GM10248 (cell line): ENCODE measurements at regions of chr21 and their contacts with region 1.

Region 1: DNA sequence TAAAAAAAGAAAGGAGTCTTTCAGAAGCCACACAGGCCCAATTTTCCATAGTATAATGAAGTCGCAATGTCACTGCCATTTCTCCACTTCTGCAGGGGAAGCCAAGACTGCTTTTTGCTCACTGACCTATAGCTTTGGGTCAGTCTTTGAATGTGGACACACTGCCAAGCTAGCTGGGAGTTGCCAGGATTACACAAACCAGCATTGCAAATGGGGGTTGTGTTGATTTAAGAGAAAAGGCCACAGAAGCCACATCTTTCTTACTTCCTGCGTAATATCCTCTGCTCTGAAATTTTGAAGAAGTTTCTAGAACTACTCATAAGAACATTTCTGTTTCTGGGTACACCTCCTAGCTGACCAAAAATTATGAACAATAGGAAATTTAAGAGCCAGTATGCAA is 45.8 kb upstream of the SAMSN1 start:
- DNase-seq: no peak
- CTCF ChIP-seq: no peak

Region 2: DNA sequence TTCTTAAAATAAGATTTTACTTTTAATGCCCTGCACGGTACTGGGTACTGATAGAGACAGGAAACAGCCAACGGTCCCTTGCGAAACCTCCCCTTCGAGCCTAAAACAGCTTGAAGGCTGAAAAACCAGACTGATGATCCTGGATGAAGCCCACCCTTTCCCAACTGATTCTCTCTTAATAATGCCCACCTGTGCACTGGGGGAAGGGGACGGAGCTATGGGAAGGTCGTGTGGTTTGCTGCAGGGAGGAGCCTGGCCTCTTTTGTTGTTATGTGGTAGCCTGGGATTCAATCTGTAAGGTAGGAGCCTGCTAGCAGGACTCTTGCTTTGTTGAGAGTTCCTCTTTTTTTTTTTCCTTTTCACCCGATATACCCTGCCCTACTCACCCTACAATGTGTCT is 71.3 kb before region 1 on chr21:
- CTCF ChIA-PET with region 1: no interaction called
- POLR2A ChIA-PET with region 1: no interaction called
- DNase-seq: no peak
- CTCF ChIP-seq: no peak

Region 3: DNA sequence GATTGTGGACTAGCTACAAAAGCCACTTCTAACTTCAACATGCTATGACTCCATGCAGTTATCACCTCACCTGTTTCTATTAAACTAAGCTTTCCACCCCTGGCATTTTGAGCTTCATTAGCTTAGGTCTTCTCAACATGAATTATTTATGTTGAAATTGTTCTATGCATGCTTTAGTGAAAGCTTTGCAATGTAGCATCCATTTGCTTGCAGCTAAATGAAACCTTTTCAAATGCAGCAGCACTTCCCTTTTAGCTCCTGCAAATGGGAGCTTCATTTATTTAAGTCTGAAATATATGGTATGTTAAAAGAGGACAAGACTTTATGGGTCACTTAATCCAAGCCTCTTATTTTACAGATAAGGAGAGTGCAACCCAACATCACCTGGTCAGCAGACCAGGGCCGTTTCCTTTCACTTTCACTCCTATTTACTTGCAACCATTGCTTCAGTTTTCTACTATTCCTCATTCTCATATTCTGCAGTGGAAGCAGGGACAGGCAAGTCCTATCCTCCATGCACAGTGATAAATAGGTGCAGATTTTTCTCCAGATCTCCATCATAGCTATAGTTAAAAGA is 10.6 kb after region 1 on chr21:
- CTCF ChIA-PET with region 1: interaction called, 28 read pairs
- POLR2A ChIA-PET with region 1: no interaction called
- DNase-seq: peak; percentile 24
- CTCF ChIP-seq: no peak

Region 4: GRCh38 chr21:14725219-14725618 is 133.3 kb after region 1 on chr21:
- CTCF ChIA-PET with region 1: no interaction called
- POLR2A ChIA-PET with region 1: no interaction called
- DNase-seq: no peak
- CTCF ChIP-seq: no peak